Gastrocnemius medialis (tissue), 4 donors: ENCODE measurements at regions of chr21 and their contacts with region 1.

Region 1: GRCh38 chr21:15064576-15065391 is at the start of gene NRIP1:
- DNase-seq: peak; percentile 86 to 91
- ATAC-seq: peak; percentile 84 to 86
- H3K4me3 ChIP-seq: peak within 1 kb of the TSS; percentile 85 to 93 (median 90)
- H3K27ac ChIP-seq: peak within 1 kb of the TSS; percentile 95 to 99 (median 97)
- H3K4me1 ChIP-seq: peaks cover 32 to 43% of the 10 kb centered on the region in 2 donors
- H3K27me3 ChIP-seq: no peaks in the 10 kb centered on the region
- CTCF ChIP-seq: no peak
- POLR2A ChIP-seq: peak; percentile 95 to 96
- total RNA-seq, gene NRIP1: 35.7 to 63.7 (median 41.0) TPM

Region 2: GRCh38 chr21:14382835-14383594 is 681.8 kb before region 1 on chr21 and contains the start of gene HSPA13:
- in situ Hi-C with region 1: loop called in 1 of 4 experiments (anchors 25 kb)
- intact Hi-C with region 1: loop called (anchors 10 kb)
- DNase-seq: peak; percentile 99 to 100
- ATAC-seq: peak; percentile 99
- H3K4me3 ChIP-seq: peak within 1 kb of the TSS; percentile 76 to 96 (median 82)
- H3K27ac ChIP-seq: peak within 1 kb of the TSS; percentile 85 to 90 (median 86)
- H3K4me1 ChIP-seq: peaks cover 10 to 21% of the 10 kb centered on the region in 2 donors
- H3K27me3 ChIP-seq: no peaks in the 10 kb centered on the region
- CTCF ChIP-seq: no peak
- POLR2A ChIP-seq: peak; percentile 61 to 67
- total RNA-seq, gene HSPA13: 4.8 to 8.3 (median 7.4) TPM

Region 3: DNA sequence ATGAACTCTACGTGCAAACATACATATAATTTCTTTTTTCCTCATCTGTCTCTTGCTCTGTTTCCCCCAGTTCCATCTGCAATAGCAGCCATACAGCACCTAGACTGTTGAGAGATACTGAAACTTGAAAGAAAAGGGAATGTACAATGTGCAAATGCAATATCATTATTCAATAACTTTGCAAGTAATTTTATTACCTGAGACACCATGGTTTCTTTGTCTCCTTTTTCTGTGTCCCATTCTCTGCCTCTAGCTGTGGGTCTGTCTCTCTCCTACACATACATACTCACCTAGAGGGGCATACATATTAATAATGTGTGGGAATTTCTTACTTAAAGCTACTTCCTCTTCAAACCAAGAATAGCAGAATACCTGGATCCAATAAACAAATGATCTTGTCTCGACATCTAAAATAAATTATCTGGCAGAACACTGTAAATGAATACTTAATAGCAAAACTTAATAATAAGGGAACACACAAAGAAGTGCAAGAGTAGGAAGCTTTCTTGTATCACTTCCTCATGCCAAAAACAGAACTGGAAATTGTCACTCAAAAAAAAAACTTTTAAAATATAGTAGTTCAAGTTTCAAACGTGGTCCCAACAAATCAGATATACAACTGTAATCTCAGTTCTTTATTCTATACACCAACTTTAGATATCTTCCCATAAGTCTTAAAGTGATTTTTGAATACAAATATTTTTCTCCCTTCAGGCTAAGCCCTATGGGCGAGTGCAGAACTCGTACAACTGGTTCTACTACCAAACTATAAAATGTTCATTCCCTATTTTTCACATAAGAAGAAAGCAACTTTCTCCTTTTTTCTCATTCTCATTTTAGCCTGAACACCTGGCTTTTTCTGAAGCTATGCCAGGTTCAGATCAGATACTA is 194.6 kb before region 1 on chr21:
- in situ Hi-C with region 1: loop called in 1 of 4 experiments (anchors 25 kb)
- intact Hi-C with region 1: loop called (anchors 2 kb)
- DNase-seq: no peak
- ATAC-seq: no peak
- H3K4me3 ChIP-seq: no peak overlapping the region
- H3K27ac ChIP-seq: no peak overlapping the region
- H3K4me1 ChIP-seq: peaks cover 4 to 5% of the 10 kb centered on the region in 2 donors
- H3K27me3 ChIP-seq: no peaks in the 10 kb centered on the region
- CTCF ChIP-seq: no peak
- POLR2A ChIP-seq: no peak

Region 4: DNA sequence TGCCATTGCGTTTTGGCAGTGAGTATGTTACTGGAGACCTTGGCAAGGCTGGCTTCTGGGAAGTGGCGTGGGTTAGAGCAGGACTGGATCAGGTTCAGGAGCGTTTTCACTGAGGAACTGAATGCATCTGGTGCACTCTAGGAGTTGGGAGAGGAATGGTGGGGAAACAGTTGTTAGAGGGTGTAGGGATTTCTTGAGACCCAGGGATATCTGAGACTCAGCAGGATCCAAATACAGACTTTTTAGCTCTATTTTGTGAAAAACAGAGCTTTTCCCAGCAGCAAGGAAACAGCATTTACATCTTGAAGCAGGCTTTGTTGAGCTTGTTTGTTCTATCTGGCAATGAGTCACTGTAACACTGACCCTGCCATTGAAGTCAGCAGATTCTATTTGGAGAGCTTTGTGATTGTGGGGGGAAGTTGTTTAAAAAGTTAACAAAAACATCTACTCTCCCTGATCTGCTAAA is 56.9 kb after region 1 on chr21:
- in situ Hi-C with region 1: no loop called
- intact Hi-C with region 1: loop called (anchors 1 kb)
- DNase-seq: peak; percentile 83 to 88
- ATAC-seq: peak; percentile 90 to 91
- H3K4me3 ChIP-seq: peak overlapping the region; percentile 1 to 37 (median 18)
- H3K27ac ChIP-seq: peak overlapping the region; percentile 76 to 90 (median 88)
- H3K4me1 ChIP-seq: peaks cover 22 to 26% of the 10 kb centered on the region in 2 donors
- H3K27me3 ChIP-seq: no peaks in the 10 kb centered on the region
- CTCF ChIP-seq: no peak
- POLR2A ChIP-seq: no peak

Region 5: DNA sequence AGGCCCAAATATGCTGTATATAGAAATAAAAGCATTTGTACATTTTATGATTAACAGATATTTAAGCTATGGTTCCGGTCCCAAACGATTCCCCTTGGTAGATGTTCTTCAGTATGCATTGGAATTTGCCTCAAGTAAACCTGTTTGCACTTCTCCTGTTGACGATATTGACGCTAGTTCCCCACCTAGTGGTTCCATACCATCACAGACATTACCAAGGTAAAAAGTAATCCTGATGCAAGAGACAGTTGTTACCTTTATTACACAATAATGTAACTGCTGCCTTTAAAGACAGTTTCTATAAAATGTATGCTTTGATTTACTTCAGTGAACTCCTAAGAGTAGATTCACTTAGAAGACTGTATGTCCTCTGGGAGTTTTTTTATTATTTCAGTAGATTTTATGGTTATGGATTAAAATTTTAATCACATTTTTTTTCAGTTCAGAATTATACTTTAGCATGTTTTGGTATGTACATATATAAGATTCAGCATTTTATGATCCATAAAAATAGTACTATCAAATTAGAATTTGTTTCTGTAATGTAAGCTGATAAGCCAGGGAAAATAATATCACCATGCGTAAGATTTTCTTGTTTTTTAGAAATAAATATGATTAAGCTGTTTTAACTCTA is 761.5 kb after region 1 on chr21:
- in situ Hi-C with region 1: no loop called
- intact Hi-C with region 1: loop called (anchors 5 kb)
- DNase-seq: peak; percentile 27 to 51
- ATAC-seq: peak; percentile 74 to 79
- H3K4me3 ChIP-seq: peak overlapping the region; percentile 21 to 32 (median 25)
- H3K27ac ChIP-seq: peak overlapping the region; percentile 85 to 92 (median 88)
- H3K4me1 ChIP-seq: peaks cover 24 to 30% of the 10 kb centered on the region in 2 donors
- H3K27me3 ChIP-seq: no peaks in the 10 kb centered on the region
- CTCF ChIP-seq: peak; percentile 42 to 62 (median 58)
- POLR2A ChIP-seq: no peak